GM10248 (cell line): ENCODE measurements at regions of chr19 and their contacts with region 1.

Region 1: GRCh38 chr19:32988724-32989123 is 16.7 kb downstream of the FAAP24 start:
- DNase-seq: no peak
- CTCF ChIP-seq: no peak

Region 2: GRCh38 chr19:32976208-32976805 is 12.4 kb before region 1 on chr19:
- CTCF ChIA-PET with region 1: interaction called, 14 read pairs
- POLR2A ChIA-PET with region 1: no interaction called
- DNase-seq: peak; percentile 57
- CTCF ChIP-seq: peak; percentile 66